ENCODE measurements at regions of chr6 and their contacts with region 1.

Region 1: DNA sequence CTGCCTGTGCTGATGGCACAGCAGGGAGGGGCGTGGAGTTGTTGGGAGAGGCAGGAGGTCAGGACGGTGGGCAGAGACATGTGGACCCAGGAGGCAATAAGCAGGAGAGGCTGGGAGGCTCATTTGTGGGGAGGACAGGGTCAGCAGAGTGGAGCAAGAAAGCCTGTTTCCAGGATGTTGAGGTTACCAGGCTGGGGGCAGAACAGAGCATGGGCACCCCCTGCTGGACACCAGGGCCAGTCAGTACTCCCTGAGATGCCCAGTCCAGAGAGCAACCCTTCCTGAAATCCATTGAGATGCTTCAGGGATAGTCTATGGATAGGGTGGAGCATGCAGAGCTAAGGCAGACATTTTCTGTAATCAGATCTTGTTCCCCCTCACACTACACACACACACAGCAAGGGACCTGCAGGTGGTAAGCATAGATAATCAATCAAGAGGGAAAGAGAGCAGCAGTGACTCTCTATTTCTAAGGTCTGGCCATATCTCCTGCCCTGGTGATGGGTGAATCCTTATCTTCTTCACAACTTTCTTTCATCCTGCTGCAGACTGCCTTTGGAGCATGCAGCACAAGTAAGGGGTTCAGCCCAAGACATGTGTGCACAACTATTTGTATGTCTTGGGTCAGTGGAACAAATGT is 41.7 kb downstream of the MOCS1 start:
- DNase-seq: peak; percentile 48
- H3K4me3 ChIP-seq: no peak overlapping the region
- H3K27ac ChIP-seq: no peak overlapping the region
- H3K4me1 ChIP-seq: no peaks in the 10 kb centered on the region
- CTCF ChIP-seq: peak; percentile 82

Region 2: GRCh38 chr6:39347906-39348585 is 544.6 kb before region 1 on chr6:
- CTCF ChIA-PET with region 1: interaction called, 3 read pairs
- POLR2A ChIA-PET with region 1: no interaction called
- intact Hi-C with region 1: loop called (anchors 5 kb)
- DNase-seq: peak; percentile 47
- H3K4me3 ChIP-seq: no peak overlapping the region
- H3K27ac ChIP-seq: no peak overlapping the region
- H3K4me1 ChIP-seq: no peaks in the 10 kb centered on the region
- CTCF ChIP-seq: peak; percentile 84

Region 3: DNA sequence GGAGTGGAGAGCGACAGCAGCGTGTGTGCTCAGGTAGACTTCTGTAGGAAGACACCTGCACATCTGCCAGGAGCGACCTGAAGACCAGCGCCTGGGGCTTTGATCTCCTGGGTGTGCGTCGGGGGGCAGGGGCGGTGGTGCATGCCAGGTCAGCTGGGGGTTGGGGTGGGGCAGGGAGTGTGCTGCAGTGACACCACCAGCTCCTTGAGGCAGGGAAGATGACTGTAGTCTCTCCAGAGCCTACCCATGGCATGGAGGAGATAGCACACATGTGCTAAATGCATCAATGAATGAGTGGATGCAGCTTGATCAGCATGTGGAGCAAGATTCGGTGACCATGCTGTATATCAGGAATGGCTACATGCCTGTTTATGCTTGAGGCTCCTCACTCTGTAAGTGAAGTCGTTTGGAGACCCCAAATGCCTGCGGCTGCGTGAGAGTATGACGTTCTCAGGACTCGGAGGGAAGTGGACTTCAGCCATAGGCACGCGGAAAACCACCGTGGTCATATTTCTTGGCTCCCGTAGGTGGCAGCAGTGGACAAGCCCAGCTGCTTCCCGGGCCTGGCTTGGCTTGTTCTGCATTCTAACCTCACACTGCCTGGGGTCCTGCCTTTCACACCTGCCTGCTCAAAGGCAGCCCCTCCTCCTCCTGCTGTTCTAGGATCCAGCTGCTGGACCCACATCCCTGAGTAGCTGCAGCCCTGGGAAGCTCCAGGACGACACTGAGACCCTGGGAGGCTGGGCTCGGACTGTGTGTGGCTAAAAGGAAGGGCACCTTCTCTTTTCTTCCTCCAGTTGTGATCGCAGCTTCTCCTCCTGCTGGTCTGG is 530.7 kb before region 1 on chr6:
- CTCF ChIA-PET with region 1: no interaction called
- POLR2A ChIA-PET with region 1: no interaction called
- intact Hi-C with region 1: loop called (anchors 1 kb)
- DNase-seq: peak; percentile 62
- H3K4me3 ChIP-seq: no peak overlapping the region
- H3K27ac ChIP-seq: no peak overlapping the region
- H3K4me1 ChIP-seq: no peaks in the 10 kb centered on the region
- CTCF ChIP-seq: peak; percentile 78

Region 4: DNA sequence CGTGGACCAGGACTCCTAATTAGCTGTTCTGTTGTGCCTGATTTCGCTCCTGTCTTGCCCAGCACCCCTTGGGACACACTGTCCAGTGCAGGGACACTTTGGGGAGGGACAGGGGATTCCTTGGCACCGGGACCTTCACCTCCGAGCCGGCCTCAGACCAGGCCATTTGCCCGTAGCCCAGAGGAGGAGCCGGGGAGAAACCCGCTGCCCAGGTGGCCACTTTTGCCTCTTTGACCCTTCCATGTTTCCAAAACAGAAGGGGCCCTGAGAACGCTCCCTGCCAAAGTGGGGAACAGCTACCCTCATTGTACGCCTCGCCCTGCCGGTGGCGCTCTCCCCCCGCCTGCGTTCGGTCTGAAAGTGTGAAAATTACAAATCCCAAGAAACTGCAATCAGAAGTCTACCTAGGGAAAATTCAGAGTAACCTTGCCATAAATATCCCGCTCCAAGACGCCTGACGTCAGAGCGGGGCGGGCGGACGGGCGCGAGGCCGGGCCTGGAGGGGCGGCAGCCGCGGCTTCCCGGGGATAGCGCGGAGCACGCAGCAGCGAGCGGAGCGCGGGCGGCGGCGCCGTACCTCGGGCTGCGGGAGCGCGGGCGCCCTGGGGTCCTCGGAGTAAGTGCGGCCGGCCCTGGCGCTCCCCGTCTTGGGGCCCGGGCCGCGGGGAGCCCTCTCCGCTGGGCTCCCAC is 100.6 kb before region 1 on chr6 and contains the start of gene DAAM2:
- CTCF ChIA-PET with region 1: no interaction called
- POLR2A ChIA-PET with region 1: interaction called, 5 read pairs
- intact Hi-C with region 1: loop called (anchors 1 kb)
- DNase-seq: no peak
- H3K4me3 ChIP-seq: no peak within 1 kb of the TSS
- H3K27ac ChIP-seq: no peak within 1 kb of the TSS
- H3K4me1 ChIP-seq: peaks cover 7% of the 10 kb centered on the region
- CTCF ChIP-seq: no peak
- total RNA-seq, gene DAAM2: 0.09 TPM in 1 of 2 replicates, not detected in the other

Region 5: GRCh38 chr6:39812853-39813533 is 79.6 kb before region 1 on chr6:
- CTCF ChIA-PET with region 1: no interaction called
- POLR2A ChIA-PET with region 1: interaction called, 3 read pairs
- intact Hi-C with region 1: loop called (anchors 1 kb)
- DNase-seq: peak; percentile 92
- H3K4me3 ChIP-seq: peak overlapping the region; percentile 28
- H3K27ac ChIP-seq: peak overlapping the region; percentile 65
- H3K4me1 ChIP-seq: peaks cover 65% of the 10 kb centered on the region
- CTCF ChIP-seq: peak; percentile 79

Region 6: DNA sequence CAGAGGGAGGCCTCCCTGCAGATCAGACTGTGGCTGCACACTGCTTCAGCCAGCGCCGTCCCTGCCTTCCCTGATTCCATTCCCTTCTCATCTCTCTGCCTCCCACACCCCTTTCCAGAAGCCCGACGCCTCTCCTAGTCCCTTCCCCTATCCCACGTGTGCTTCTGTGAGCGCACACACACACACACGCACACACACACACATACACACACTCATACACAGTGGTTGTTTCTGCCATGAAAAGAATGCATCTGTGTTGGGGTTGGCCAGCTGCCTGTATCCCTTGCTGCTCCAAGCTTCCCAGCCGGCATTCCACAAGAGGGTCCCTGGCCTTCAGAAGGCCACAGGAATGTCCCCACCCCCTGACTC is 10.1 kb before region 1 on chr6:
- CTCF ChIA-PET with region 1: no interaction called
- POLR2A ChIA-PET with region 1: no interaction called
- intact Hi-C with region 1: no loop called
- DNase-seq: no peak
- H3K4me3 ChIP-seq: no peak overlapping the region
- H3K27ac ChIP-seq: no peak overlapping the region
- H3K4me1 ChIP-seq: no peaks in the 10 kb centered on the region
- CTCF ChIP-seq: no peak

Region 7: GRCh38 chr6:40611912-40612311 is 719.3 kb after region 1 on chr6:
- CTCF ChIA-PET with region 1: no interaction called
- POLR2A ChIA-PET with region 1: no interaction called
- intact Hi-C with region 1: no loop called
- DNase-seq: no peak
- H3K4me3 ChIP-seq: no peak overlapping the region
- H3K27ac ChIP-seq: no peak overlapping the region
- H3K4me1 ChIP-seq: no peaks in the 10 kb centered on the region
- CTCF ChIP-seq: no peak

Measured in OCI-LY7 (cell line).